ENCODE measurements at regions of chr3 and their contacts with region 1.

Region 1: DNA sequence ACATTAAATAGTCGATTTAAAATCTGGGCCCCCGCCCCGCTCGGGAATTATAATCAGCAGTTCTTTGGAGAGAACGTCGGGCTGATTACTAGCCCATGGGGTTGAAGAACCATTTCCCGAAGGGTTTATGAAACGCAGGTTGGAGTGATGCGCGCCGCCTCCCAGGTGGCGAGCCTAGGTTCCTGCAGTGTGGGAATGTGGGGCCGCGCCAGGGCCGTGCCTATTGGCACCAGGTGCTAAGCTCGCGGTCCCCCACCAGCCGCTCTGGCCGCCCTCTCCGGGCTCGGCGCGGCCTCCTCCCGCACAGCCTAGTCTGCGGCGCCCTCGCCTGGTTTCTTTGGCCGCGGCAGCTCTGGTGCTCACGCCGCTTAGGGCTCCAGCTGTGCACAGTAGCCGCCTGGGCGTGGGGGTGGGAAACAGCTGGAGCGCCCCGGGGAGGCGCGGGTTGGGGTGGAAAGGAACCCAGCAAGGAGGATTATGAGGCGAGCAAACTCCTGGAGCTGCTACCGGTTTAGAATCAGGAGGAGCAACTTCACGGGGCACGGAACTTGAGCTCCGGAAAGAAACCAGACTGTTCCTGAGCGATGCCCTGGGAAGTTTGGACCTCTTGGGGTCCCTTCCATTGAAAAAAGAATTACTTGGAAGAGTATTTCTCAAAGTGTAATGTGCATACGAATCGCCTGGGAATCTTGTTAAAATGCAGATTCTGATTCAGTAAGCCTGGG is 5.6 kb upstream of the MECOM start:
- DNase-seq: peak in 1 of 2 donors; percentile 87
- H3K4me3 ChIP-seq: peak overlapping the region; percentile 66 to 77
- H3K27ac ChIP-seq: peak overlapping the region; percentile 83 to 87
- H3K4me1 ChIP-seq: no peaks in the 10 kb centered on the region
- H3K27me3 ChIP-seq: no peaks in the 10 kb centered on the region
- CTCF ChIP-seq: peak; percentile 82 to 96 (median 85)

Region 2: GRCh38 chr3:168952551-168952950 is 716.6 kb before region 1 on chr3:
- intact Hi-C with region 1: loop called (anchors 1 kb)
- DNase-seq: no peak
- H3K4me3 ChIP-seq: peak overlapping the region in 1 of 2 donors; percentile 47
- H3K27ac ChIP-seq: no peak overlapping the region
- H3K4me1 ChIP-seq: no peaks in the 10 kb centered on the region
- H3K27me3 ChIP-seq: no peaks in the 10 kb centered on the region
- CTCF ChIP-seq: peak in 2 of 3 experiments; percentile 33 to 37

Region 3: GRCh38 chr3:169041677-169042171 is 627.4 kb before region 1 on chr3:
- intact Hi-C with region 1: loop called (anchors 2 kb)
- DNase-seq: no peak
- H3K4me3 ChIP-seq: peak overlapping the region in 1 of 2 donors; percentile 11
- H3K27ac ChIP-seq: no peak overlapping the region
- H3K4me1 ChIP-seq: peaks cover 0 to 2% of the 10 kb centered on the region in 2 donors
- H3K27me3 ChIP-seq: no peaks in the 10 kb centered on the region
- CTCF ChIP-seq: peak in 2 of 3 experiments; percentile 62 to 68

Region 4: DNA sequence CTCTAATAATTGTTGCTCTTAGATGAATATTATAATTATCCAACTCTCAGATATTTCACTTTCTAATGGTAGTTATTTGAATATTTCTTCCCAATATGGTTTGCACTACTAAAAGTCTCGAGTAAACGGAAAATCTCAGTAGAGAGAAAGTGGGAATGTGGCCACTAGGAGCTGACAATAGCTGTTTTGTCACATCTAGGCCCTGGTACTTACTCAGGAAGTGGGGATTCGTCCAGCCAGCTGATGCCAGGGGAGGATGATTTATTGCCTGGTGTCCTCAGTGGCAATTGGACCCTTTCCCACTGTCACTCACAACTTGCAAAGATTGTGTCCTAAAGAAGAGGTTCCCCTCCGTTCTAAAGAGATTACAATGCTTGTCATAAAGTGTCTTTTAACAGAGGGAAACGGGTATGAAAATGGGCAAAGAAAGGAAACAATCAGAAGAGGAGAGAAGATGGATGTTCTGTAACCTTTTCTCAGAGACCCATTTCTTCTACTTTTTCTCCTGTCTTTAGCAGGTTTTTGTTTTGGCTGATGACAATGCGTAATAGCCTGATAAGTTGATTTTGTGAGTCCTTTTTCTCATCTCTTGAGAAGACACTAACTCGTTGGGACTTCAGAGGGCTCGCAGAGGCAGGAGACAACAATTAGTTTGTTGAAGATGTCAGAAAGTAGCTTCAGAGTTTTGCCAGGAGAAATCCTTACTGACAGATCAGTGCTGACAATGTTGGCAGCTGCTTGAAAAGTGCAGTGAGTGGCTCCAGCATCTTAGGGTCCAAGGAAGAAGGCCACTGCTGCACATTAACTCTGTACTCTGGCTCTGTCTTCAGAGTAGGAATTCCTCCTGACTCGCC is 326.2 kb before region 1 on chr3:
- intact Hi-C with region 1: loop called (anchors 5 kb)
- DNase-seq: no peak
- H3K4me3 ChIP-seq: no peak overlapping the region
- H3K27ac ChIP-seq: peak overlapping the region in 1 of 2 donors; percentile 26
- H3K4me1 ChIP-seq: peaks cover 0 to 9% of the 10 kb centered on the region in 2 donors
- H3K27me3 ChIP-seq: no peaks in the 10 kb centered on the region
- CTCF ChIP-seq: no peak

Region 5: DNA sequence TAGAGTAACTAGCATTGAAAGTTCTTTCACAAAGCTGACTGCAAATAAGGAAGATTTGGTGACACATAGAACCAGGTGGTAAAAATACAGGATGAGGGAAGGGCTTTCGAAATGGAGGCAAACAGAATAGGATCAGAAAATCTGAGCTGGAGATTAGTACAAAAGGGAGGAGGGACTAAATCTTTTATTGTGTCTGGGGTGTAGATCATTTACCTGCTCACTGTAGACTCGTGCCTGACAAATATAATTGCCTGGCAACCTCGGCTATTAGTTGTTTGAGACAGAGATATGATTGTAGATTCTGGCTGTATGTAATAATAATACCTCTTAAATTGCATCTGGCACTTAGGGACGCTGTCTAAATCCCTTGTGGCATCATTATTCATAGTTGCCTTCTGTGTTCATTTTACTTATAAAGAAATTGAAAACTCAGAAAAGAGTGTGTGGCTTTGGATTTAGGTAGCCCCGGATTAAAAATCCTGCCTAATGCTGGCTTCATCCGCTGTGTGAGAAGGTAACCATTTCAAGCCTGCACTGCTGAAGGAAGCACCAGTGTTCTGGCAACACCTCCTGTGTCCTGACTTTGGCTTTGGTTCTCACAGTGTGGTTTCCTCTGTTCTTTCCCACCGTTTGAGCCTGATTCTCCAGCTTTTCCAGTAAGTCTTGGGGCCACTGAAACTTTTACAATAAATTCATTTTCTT is 343.7 kb after region 1 on chr3:
- intact Hi-C with region 1: no loop called
- DNase-seq: no peak
- H3K4me3 ChIP-seq: no peak overlapping the region
- H3K27ac ChIP-seq: no peak overlapping the region
- H3K4me1 ChIP-seq: no peaks in the 10 kb centered on the region
- H3K27me3 ChIP-seq: no peaks in the 10 kb centered on the region
- CTCF ChIP-seq: no peak